Head of caudate nucleus (tissue), 42 donors: ENCODE measurements at regions of chr1 and their contacts with region 1.

Region 1: DNA sequence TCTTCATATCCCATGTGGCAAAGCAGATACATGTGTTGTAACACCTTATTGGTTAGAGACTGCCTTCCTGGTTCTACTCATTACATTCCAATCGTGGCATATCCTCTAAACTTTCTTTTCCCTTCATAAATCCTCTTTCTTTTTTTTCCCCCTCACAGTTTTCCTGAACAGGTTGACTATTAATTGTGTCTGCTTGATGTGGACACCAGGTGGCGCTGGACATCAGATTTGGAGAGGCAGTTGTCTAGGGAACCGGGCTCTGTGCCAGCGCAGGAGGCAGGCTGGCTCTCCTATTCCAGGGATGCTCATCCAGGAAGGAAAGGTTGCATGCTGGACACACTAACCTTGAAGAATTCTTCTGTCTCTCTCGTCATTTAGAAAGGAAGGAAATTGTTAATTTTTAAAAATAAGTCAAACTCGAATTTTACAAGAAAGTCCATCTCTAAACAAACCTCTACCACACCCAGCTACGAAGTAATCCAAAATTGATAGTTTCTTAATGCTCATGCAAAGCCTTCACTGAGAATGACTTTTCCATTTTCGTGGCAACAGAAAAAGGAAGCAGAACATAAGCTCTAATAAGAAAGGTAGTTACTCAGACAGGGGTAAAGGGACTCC is 59.4 kb upstream of the ASB17 start:
- DNase-seq: peak; percentile 84 to 98 (median 94)

Region 2: DNA sequence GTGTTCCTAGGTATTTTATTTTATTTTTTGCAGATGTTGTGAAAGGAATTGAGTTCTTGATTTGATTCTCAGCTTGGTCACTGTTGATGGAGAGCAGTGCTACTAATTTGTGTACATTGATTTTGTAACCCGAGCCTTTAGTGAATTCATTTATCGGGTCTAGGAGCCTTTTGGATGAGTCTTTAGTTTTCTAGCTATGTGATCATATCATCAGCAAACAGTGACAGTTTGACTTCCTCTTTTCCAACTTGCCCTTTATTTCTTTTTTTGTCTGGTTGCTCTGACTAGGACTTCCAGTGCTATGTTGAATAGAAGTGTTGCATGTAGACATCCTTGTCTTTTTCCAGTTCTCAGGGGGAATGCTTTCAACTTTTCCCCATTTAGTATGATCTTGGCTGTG is 718.5 kb before region 1 on chr1:
- intact Hi-C with region 1: no loop called
- DNase-seq: no peak

Region 3: GRCh38 chr1:75861831-75862230 is 129.8 kb before region 1 on chr1:
- intact Hi-C with region 1: no loop called
- DNase-seq: no peak

Region 4: DNA sequence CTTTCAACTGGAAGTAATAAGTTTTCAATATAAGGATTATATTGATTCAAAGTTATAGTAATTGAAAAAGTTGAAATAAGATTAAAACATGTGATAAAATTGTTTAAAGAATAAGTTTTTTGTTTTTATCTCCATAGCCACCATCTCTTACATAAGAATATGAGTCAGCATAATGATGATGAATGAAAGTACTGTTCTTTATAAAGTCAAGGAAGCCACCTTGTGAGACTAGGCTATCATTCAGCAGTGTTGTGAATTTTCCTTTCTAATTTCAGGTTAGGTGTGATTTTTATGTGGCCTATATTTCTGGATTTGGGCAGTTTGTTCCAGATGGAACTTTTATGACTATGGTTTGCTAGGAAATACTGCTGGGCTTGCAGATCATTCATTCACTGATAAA is 37.0 kb before region 1 on chr1:
- intact Hi-C with region 1: no loop called
- DNase-seq: no peak

Region 5: GRCh38 chr1:76068542-76068941 is 76.9 kb after region 1 on chr1:
- intact Hi-C with region 1: no loop called
- DNase-seq: no peak

Region 6: DNA sequence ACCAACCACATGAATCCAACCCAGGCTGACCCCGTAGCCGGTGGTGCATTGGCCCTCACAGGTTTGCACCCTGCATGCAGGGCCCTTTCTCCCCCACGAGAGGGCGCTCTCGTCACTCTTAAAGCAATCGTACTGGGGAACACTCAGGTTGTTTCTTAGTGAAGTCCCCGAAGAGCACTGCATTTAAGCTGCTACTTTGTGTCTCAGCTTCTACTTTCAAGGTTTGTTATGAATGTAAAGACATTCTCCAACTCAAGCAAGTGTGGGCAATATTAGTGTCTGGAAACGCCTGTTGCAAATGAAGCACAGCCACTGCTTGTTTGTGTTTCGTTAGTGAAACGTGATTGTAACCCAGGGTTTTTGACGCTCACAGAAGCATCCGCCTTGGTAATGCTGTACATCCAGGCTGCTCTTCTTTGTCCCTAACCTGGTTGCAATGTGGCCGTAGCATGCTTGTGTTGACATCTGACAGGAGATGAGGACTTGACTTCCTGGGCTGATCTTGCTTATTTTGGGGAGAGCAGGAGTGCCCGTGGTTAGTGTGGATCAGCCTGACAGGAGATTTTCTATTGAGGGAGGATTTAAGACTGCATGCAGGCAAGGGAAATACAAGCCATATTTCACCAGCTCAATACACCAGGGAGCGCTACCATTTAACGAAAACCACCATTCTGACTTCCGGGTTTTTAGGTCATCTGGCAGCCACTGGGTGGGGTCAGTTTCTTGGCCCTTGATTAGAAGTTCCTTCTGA is 162.8 kb after region 1 on chr1:
- intact Hi-C with region 1: loop called (anchors 10 kb)
- DNase-seq: peak; percentile 60 to 94 (median 84)